ENCODE measurements at regions of chr6 and their contacts with region 1.

Region 1: DNA sequence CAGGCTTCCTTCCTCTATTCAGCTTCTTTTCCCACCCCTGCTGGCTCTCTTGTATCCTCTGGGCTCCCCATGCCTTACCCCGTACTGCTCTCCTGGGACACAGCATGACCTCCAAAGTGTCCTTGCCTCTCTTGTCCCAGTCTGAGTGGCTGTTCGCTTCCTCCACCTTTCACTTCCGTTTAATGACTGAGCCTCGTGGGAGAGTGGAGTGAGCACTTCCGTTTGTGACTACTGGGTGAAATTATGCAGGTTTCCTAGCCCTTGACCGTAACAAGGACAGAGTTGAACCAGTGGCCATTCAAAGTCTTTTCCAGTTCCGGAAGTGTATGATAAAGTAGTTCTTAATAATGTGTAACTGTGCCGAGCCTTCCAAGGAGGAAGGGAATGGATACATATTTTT is 109.2 kb downstream of the ARID1B start:
- DNase-seq: no peak

Region 2: DNA sequence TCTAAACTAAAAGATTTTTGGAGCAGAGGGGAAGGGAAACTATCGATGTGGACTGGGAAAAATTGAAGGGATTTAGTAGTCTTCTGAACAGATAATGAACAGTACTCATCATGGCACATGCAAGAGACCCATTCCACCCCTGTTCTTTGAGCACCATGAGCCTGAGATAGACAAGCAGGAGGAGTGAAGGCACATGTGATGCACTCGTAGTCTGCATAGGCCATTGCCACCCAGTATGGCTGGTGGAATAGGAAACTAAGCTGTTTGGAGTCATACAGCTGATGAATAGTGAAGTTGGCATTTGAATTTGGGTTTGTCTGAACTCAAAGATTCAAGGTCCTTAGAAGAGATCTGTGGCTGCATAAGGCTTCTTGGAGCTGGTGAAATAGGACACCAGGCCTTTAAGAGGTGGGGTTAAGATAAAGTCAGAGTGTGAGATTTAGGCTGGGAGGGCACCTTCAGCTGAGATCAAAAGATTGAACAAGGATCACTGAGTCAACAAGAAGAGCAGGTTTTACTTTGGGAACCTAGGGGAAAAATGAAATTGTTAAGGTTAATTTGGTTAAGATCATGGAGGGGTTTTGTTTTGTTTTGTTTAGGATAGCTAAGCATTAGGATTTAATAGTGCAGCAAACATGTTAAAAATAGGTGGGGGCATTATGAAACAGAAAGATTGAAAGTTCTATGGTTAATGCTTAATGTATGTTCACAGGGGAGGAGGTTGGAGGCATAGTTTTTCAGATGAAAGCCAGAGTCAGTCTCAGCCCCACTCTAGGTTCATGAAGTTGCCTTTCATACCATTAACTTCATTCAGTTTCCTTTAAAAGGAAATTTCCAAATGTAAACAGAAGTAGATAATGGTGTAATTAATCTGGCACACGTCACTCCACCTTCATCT is 39.6 kb after region 1 on chr6:
- intact Hi-C with region 1: loop called (anchors 5 kb)
- DNase-seq: no peak

Region 3: GRCh38 chr6:156953479-156954146 is 67.2 kb after region 1 on chr6:
- intact Hi-C with region 1: loop called (anchors 5 kb)
- DNase-seq: no peak

Region 4: DNA sequence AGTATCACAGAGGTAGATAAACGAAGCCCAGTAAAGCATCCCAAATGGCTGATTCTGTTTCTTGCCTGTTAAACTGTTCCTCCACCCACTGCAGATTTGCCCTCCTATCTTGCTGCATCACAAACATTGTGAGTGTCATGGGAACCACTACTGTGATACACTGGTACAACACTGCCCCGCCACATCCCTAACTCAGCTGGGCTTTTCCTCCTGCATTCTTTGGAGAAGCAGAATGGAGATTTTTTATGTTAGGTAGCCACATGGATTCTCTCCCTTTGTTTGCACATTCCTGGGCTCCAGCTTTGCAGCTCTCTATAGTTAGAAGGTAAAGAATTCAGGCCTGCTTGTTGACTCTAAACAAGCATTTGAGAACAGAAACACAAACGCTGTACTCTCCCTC is 202.8 kb after region 1 on chr6:
- intact Hi-C with region 1: no loop called
- DNase-seq: no peak